CD14-positive monocyte (primary cell): ENCODE measurements at regions of chr20 and their contacts with region 1.

Region 1: DNA sequence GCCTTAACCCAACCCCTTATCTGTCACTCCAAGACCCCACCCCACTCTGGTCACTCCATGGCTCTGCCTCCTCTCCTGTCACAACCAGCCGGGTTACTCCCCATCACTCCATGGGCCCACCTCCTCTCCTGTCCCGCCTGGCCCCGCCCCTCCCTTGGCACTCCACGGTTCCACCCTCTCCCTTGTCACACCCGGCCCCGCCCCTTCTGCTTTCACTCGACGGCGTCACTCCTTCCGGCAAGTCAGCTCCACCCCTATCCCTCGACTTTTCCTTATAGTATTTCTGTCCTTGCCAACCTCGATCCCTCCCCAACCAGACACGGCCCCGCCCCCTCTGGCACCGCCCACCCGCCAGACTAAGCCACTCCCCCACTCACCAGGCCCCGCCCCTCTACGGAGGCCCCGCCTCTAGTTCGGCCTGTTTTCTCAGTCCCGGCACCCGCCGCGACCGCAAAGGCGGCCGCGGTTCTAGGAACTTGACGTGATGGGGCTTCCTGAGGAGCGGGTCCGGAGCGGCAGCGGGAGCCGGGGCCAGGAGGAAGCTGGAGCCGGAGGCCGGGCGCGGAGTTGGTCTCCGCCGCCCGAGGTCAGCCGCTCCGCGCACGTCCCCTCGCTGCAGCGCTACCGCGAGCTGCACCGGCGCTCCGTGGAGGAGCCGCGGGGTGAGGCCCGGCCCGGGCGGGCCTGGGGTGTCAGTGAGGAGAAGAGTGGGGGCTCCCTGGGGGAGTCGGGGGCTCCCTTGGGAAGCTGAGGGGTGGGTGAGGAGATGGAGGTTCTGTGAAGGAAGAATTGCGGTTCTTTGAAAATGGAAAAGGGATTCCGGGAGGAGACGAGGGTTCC is at the start of gene ACSS2:
- DNase-seq: peak; percentile 96 to 100 (median 99)
- H3K4me3 ChIP-seq: peak within 1 kb of the TSS; percentile 78 to 97 (median 88)
- H3K4me3 Mint-ChIP-seq: peak within 1 kb of the TSS; percentile 100
- H3K27ac ChIP-seq: peak within 1 kb of the TSS; percentile 94 to 99
- H3K27ac Mint-ChIP-seq: peak within 1 kb of the TSS; percentile 99 to 100 (median 100)
- H3K4me1 ChIP-seq: peaks cover 50 to 51% of the 10 kb centered on the region in 2 donors
- H3K4me1 Mint-ChIP-seq: peaks cover 65% of the 10 kb centered on the region
- H3K27me3 ChIP-seq: no peaks in the 10 kb centered on the region
- H3K27me3 Mint-ChIP-seq: peaks cover 1 to 12% (median 9%) of the 10 kb centered on the region in 3 donors
- CTCF ChIP-seq: no peak
- polyA plus RNA-seq, gene ACSS2: 37.7 to 67.2 (median 48.4) TPM

Region 2: GRCh38 chr20:34791289-34792020 is 84.9 kb before region 1 on chr20:
- intact Hi-C with region 1: no loop called
- DNase-seq: no peak
- H3K4me3 ChIP-seq: no peak overlapping the region
- H3K4me3 Mint-ChIP-seq: no peak overlapping the region
- H3K27ac ChIP-seq: peak overlapping the region in 1 of 2 donors; percentile 24
- H3K27ac Mint-ChIP-seq: peak overlapping the region in 2 of 7 donors; percentile 32 to 41
- H3K4me1 ChIP-seq: peaks cover 4 to 6% of the 10 kb centered on the region in 2 donors
- H3K4me1 Mint-ChIP-seq: peaks cover 20% of the 10 kb centered on the region
- H3K27me3 ChIP-seq: no peaks in the 10 kb centered on the region
- H3K27me3 Mint-ChIP-seq: no peaks in the 10 kb centered on the region
- CTCF ChIP-seq: no peak

Region 3: DNA sequence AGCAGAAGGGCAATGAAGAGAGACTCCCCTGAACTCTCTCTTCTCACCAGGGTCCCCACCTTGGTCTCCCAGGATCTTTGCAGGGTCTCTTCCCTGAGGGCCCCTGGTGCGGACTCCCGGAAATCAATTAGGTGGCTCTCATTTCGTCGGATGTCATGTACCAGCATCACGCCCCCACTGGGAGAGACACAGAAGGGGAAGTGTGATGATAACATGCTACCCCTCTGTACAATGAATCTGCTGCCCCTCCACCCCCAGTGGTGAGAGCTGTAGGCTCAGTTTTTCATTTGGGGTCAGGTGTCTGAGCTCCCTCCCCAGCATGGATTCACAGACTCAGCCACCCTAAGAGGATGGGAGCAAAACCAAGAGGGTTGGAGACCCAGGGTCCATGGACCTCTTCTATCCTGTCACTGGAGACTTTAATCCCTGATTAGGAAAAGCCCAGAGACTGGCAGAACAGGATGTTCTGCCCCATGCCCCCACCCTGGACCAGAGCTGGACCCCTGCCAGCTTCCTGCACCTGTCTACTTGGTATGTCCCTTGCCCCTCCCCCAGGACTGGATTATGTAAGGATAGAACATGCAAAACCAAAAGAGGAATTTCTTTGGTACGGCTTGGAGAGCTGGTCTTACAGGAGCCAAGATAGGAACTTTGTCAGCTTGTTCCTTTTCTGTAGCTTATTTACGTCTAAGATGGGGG is 14.8 kb before region 1 on chr20:
- intact Hi-C with region 1: no loop called
- DNase-seq: no peak
- H3K4me3 ChIP-seq: no peak overlapping the region
- H3K4me3 Mint-ChIP-seq: no peak overlapping the region
- H3K27ac ChIP-seq: no peak overlapping the region
- H3K27ac Mint-ChIP-seq: no peak overlapping the region
- H3K4me1 ChIP-seq: peaks cover 3 to 4% of the 10 kb centered on the region in 2 donors
- H3K4me1 Mint-ChIP-seq: peaks cover 5% of the 10 kb centered on the region
- H3K27me3 ChIP-seq: no peaks in the 10 kb centered on the region
- H3K27me3 Mint-ChIP-seq: peaks cover 0 to 3% (median 2%) of the 10 kb centered on the region in 3 donors
- CTCF ChIP-seq: no peak

Region 4: GRCh38 chr20:34891166-34892062 is 15.0 kb after region 1 on chr20:
- intact Hi-C with region 1: loop called in 1 of 2 experiments (anchors 2 kb)
- DNase-seq: peak; percentile 87 to 94 (median 94)
- H3K4me3 ChIP-seq: peak overlapping the region in 1 of 3 experiments; percentile 7
- H3K4me3 Mint-ChIP-seq: no peak overlapping the region
- H3K27ac ChIP-seq: peak overlapping the region; percentile 34 to 92
- H3K27ac Mint-ChIP-seq: peak overlapping the region; percentile 82 to 97 (median 92)
- H3K4me1 ChIP-seq: peaks cover 34 to 37% of the 10 kb centered on the region in 2 donors
- H3K4me1 Mint-ChIP-seq: peaks cover 41% of the 10 kb centered on the region
- H3K27me3 ChIP-seq: no peaks in the 10 kb centered on the region
- H3K27me3 Mint-ChIP-seq: peaks cover 0 to 3% (median 0%) of the 10 kb centered on the region in 3 donors
- CTCF ChIP-seq: no peak

Region 5: DNA sequence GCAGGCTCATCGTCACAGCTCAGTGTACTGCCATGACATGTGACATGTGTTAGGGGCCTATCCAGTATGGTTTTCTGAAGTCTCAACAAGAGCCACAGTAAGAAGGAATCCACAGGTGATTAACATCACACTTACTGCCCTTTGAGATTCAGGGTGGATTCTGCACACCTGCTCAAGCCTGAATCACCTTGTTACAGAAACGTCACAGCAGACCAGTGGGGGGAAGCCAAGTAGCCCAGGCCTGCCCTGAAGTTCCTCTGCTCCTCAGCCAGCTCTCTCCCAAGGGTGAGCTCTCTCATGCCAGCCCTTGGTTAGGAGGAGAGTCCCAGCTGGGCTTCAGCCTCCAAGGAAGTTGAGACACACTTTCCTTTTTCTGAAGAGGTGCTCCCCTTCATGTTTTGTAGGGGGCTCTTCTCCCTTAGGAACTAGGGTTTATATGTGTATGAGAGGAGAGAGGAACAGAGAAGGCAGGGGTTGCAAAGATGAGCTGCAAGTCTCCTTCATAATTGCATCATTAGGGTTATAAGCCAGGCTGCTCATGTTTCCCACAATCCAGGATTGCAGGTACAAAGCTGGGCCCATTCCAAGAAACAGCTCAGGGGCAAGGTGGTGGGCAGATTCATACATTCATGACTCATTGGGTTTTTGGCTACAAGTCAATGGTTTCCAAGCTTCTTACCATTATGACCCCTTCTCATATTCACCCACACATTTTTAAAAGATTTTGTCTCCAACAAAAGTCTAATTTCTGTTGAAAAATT is 67.6 kb after region 1 on chr20:
- intact Hi-C with region 1: loop called in 1 of 2 experiments (anchors 5 kb)
- DNase-seq: no peak
- H3K4me3 ChIP-seq: no peak overlapping the region
- H3K4me3 Mint-ChIP-seq: no peak overlapping the region
- H3K27ac ChIP-seq: no peak overlapping the region
- H3K27ac Mint-ChIP-seq: peak overlapping the region in 1 of 7 donors; percentile 27
- H3K4me1 ChIP-seq: peaks cover 31 to 32% of the 10 kb centered on the region in 2 donors
- H3K4me1 Mint-ChIP-seq: peaks cover 27% of the 10 kb centered on the region
- H3K27me3 ChIP-seq: no peaks in the 10 kb centered on the region
- H3K27me3 Mint-ChIP-seq: peaks cover 0 to 2% (median 0%) of the 10 kb centered on the region in 3 donors
- CTCF ChIP-seq: no peak

Region 6: GRCh38 chr20:34968042-34968775 is 91.8 kb after region 1 on chr20:
- intact Hi-C with region 1: loop called in 1 of 2 experiments (anchors 2 kb)
- DNase-seq: no peak
- H3K4me3 ChIP-seq: no peak overlapping the region
- H3K4me3 Mint-ChIP-seq: no peak overlapping the region
- H3K27ac ChIP-seq: no peak overlapping the region
- H3K27ac Mint-ChIP-seq: peak overlapping the region in 1 of 7 donors; percentile 57
- H3K4me1 ChIP-seq: no peaks in the 10 kb centered on the region
- H3K4me1 Mint-ChIP-seq: no peaks in the 10 kb centered on the region
- H3K27me3 ChIP-seq: no peaks in the 10 kb centered on the region
- H3K27me3 Mint-ChIP-seq: peaks cover 0 to 2% (median 2%) of the 10 kb centered on the region in 3 donors
- CTCF ChIP-seq: no peak

Region 7: DNA sequence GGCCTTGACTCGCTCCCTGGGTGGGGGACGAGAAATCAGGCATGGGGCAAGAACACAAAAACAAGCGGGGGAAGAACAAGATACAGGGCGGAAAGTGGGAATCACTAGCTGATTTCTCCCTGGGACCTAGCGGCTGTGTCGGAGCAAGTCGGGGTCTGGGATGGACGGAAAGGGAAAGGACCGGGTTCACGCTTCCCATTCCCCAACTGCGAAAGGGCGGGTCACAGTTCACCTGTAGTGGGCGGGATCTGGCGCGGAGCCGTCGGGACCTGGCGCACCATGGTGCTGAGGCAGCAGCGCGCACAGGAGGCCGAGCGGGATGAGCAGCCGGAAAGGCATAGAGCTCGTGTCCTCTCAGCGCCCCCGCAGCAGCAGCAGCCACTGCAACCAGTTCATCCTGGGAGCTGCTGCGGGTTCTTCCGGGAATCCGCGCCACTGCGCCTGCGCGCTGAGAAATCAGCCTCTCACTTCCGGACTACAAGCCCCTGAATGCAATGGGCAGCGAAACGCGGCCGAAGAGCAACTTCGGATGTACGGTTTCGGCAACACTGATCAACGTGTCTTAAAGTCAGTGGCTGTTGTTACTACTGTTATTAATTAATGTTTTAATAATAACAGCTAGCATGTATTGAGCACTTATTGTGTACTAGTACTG is 270.7 kb after region 1 on chr20 and contains the start of gene EDEM2:
- intact Hi-C with region 1: loop called in 1 of 2 experiments (anchors 5 kb)
- DNase-seq: peak; percentile 91 to 92 (median 92)
- H3K4me3 ChIP-seq: peak within 1 kb of the TSS; percentile 95 to 96 (median 95)
- H3K4me3 Mint-ChIP-seq: peak within 1 kb of the TSS; percentile 95 to 96
- H3K27ac ChIP-seq: peak within 1 kb of the TSS; percentile 68 to 88
- H3K27ac Mint-ChIP-seq: peak within 1 kb of the TSS; percentile 86 to 96 (median 96)
- H3K4me1 ChIP-seq: peaks cover 41 to 46% of the 10 kb centered on the region in 2 donors
- H3K4me1 Mint-ChIP-seq: peaks cover 43% of the 10 kb centered on the region
- H3K27me3 ChIP-seq: no peaks in the 10 kb centered on the region
- H3K27me3 Mint-ChIP-seq: no peaks in the 10 kb centered on the region
- CTCF ChIP-seq: no peak
- polyA plus RNA-seq, gene EDEM2: 39.5 to 86.1 (median 75.6) TPM

Region 8: GRCh38 chr20:35619196-35620095 is 743.1 kb after region 1 on chr20:
- intact Hi-C with region 1: loop called in 1 of 2 experiments (anchors 5 kb)
- DNase-seq: peak; percentile 26 to 58 (median 34)
- H3K4me3 ChIP-seq: peak overlapping the region; percentile 7 to 74 (median 39)
- H3K4me3 Mint-ChIP-seq: peak overlapping the region; percentile 80 to 97
- H3K27ac ChIP-seq: no peak overlapping the region
- H3K27ac Mint-ChIP-seq: peak overlapping the region in 1 of 7 donors; percentile 46
- H3K4me1 ChIP-seq: peaks cover 36 to 47% of the 10 kb centered on the region in 2 donors
- H3K4me1 Mint-ChIP-seq: peaks cover 42% of the 10 kb centered on the region
- H3K27me3 ChIP-seq: peaks cover 16 to 32% of the 10 kb centered on the region in 2 donors
- H3K27me3 Mint-ChIP-seq: peaks cover 38 to 45% (median 39%) of the 10 kb centered on the region in 3 donors
- CTCF ChIP-seq: peak; percentile 66